Left ventricle myocardium superior (tissue), 1 donor: ENCODE measurements at regions of chr2 and their contacts with region 1.

Region 1: DNA sequence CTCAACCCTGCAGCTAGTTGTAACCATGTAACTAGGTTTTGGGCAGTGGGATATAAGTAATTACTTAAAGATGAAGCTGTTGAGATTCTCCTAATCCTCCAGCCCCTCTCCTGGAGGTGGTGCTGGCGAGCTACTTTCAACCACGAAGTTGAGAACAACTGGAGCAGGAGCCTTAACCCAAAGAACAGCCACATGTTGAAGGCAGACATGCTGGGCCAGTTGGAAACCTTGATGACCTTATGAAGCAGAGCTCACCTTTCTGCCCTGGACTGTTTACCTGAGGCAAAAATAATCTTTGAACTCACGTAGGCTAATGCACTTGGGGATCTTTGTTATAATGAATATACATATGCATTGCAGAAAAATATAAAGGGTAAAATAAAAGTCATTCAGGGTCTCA is 89.6 kb upstream of the NPAS2 start:
- DNase-seq: peak; percentile 72
- ATAC-seq: peak; percentile 89

Region 2: DNA sequence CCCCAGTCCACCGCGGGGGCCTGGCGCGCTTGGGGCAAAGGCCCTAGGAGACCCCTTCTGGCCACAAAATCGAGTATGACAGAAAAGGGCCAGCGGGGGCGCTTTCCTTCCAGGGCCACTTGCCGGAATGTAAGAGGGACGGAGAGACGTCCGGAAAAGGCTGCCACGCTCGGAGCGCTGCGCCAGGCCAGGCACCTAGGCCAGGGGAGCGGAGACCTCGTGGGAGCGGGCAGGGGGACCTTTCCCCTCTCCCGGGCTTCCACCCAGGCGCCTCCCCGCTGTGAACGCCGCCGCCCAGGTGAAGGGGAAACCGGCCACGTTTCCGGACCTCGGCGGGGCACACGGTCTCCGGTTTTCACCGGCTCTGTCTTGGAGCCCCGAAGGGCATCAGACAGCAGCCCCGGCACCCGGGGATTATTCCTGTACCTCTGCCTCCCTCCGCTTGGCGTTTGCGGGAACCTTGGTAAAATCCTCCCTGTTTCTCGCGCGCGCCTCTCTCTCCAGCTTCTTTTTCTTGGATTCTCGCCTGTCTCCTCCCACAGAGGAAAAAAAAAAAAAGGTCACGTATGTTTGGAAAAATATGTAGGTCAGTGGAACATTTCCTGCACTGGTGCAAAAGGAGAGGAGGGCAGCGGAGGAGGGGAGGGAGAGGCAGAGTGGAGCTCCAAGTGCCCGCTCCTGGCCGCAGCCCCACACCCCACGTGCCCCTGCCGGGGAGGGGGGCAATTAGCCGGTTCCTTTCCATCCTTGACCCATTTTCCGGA is 88.4 kb after region 1 on chr2:
- intact Hi-C with region 1: loop called (anchors 5 kb)
- DNase-seq: peak; percentile 68
- ATAC-seq: peak; percentile 71

Region 3: GRCh38 chr2:100984892-100985379 is 254.6 kb after region 1 on chr2:
- intact Hi-C with region 1: loop called (anchors 2 kb)
- DNase-seq: peak; percentile 84
- ATAC-seq: peak; percentile 76